Aorta (tissue), 5 donors: ENCODE measurements at regions of chr22 and their contacts with region 1.

Region 1: DNA sequence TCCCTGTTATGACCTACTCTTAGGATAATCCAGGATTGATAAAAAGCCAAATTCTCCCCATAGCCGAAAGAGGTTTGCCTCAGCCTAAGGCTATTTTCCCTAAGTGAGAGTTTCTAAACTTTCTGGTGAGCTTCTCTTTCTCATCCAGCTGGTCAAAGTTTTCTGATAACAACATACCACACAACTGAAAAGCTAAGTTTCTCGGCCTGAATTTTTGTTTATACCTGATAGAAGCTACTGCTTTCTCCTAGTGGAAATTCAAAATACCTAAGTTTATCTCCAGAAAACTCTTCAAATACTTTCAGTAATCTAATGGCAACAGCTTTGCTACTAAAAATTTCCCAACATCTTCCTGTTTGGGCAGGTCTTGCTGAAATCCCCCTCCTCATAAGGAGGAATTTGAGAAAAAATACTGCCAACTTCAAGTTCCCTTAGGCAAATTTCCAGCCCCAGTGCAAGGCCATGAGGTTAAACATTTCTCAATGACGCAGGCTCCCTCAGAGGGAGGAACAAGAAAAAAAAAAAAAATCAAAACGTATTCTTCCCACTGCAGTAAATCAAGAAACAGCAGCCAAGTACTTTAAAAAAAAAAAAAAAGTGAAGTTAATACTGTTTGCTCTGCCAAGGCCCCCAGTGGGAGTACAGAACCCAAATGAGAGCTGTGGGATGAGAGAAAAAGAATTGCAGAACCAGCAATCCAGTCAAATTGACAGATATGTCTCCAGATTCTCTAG is 127.0 kb downstream of the MRTFA start:
- DNase-seq: peak in 1 of 2 donors; percentile 70
- ATAC-seq: peak; percentile 72
- H3K4me3 ChIP-seq: peak overlapping the region in 1 of 2 donors; percentile 34
- H3K27ac ChIP-seq: peak overlapping the region; percentile 57 to 75
- H3K4me1 ChIP-seq: peaks cover 4 to 20% of the 10 kb centered on the region in 2 donors
- H3K27me3 ChIP-seq: no peaks in the 10 kb centered on the region

Region 2: GRCh38 chr22:40645579-40646197 is 136.1 kb after region 1 on chr22:
- intact Hi-C with region 1: loop called in 1 of 2 experiments (anchors 5 kb)
- DNase-seq: no peak
- ATAC-seq: no peak
- H3K4me3 ChIP-seq: no peak overlapping the region
- H3K27ac ChIP-seq: no peak overlapping the region
- H3K4me1 ChIP-seq: no peaks in the 10 kb centered on the region
- H3K27me3 ChIP-seq: no peaks in the 10 kb centered on the region